Activated T-helper 1 cell treated with anti-CD3 and anti-CD28 coated beads, Interleukin-12 subunit alpha, Interleukin-12 subunit beta, Interleukin-2, Interleukin-4 antibody, amounts not matched to agents 30 ng/mL and 10 ng/mL and 1 ng/mL, durations not matched to agents 14 hours and 24 hours and 36 hours (primary cell): ENCODE measurements at regions of chr4 and their contacts with region 1.

Region 1: DNA sequence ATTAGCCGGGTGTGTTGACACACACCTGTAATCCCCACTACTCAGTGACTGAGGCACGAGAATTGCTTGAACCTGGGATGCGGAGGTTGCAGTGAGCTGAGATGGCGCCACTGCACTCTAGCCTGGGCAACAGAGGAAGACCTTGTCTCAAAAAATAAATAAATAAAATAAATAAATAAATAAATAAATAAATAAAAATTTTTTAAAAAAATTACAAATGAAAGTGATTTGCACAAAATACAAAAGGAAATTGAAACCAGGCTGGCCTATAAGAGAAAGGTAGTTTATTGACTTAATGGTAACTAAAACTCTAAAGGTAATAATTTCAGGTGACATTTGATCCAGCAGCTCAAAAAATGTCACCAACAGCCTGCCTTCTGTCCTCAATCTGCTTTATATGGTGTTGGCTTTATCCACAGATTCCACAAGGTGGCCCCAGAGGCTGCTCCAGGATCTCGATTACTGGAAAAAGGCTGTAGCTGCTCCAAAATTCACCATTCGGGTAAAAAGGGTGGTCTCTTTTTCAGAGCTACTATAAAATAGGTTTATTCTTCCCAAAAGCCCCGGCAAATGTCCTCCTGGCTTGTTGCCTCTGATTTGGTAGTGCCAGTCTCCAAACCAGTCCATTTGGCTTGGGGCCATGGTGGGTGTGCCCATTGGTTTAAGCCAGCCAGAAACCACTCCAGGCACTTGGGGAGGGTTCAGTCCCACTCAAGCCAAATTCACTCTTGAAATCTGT is 61.4 kb upstream of the TRIM2 start:
- DNase-seq: no peak
- H3K4me3 Mint-ChIP-seq: no peak overlapping the region
- H3K27ac Mint-ChIP-seq: no peak overlapping the region
- H3K4me1 Mint-ChIP-seq: no peaks in the 10 kb centered on the region
- H3K27me3 Mint-ChIP-seq: peaks cover 22% of the 10 kb centered on the region

Region 2: GRCh38 chr4:153318696-153319320 is 175.9 kb after region 1 on chr4:
- intact Hi-C with region 1: loop called (anchors 1 kb)
- DNase-seq: no peak
- H3K4me3 Mint-ChIP-seq: no peak overlapping the region
- H3K27ac Mint-ChIP-seq: no peak overlapping the region
- H3K4me1 Mint-ChIP-seq: no peaks in the 10 kb centered on the region
- H3K27me3 Mint-ChIP-seq: peaks cover 5% of the 10 kb centered on the region

Region 3: GRCh38 chr4:153750197-153750817 is 607.4 kb after region 1 on chr4:
- intact Hi-C with region 1: loop called (anchors 1 kb)
- DNase-seq: peak; percentile 52
- H3K4me3 Mint-ChIP-seq: no peak overlapping the region
- H3K27ac Mint-ChIP-seq: no peak overlapping the region
- H3K4me1 Mint-ChIP-seq: no peaks in the 10 kb centered on the region
- H3K27me3 Mint-ChIP-seq: peaks cover 31% of the 10 kb centered on the region